ENCODE measurements at regions of chr17 and their contacts with region 1.

Region 1: GRCh38 chr17:81253358-81254131 is 14.4 kb downstream of the NDUFAF8 start:
- DNase-seq: peak in 1 of 5 donors; percentile 52
- ATAC-seq: peak in 3 of 4 donors; percentile 33 to 45 (median 35)
- H3K4me3 ChIP-seq: no peak overlapping the region
- H3K27ac ChIP-seq: no peak overlapping the region
- H3K4me1 ChIP-seq: peaks cover 3 to 19% (median 13%) of the 10 kb centered on the region in 12 donors
- H3K27me3 ChIP-seq: no peaks in the 10 kb centered on the region
- CTCF ChIP-seq: peak; percentile 66 to 88 (median 81)
- POLR2A ChIP-seq: no peak

Region 2: DNA sequence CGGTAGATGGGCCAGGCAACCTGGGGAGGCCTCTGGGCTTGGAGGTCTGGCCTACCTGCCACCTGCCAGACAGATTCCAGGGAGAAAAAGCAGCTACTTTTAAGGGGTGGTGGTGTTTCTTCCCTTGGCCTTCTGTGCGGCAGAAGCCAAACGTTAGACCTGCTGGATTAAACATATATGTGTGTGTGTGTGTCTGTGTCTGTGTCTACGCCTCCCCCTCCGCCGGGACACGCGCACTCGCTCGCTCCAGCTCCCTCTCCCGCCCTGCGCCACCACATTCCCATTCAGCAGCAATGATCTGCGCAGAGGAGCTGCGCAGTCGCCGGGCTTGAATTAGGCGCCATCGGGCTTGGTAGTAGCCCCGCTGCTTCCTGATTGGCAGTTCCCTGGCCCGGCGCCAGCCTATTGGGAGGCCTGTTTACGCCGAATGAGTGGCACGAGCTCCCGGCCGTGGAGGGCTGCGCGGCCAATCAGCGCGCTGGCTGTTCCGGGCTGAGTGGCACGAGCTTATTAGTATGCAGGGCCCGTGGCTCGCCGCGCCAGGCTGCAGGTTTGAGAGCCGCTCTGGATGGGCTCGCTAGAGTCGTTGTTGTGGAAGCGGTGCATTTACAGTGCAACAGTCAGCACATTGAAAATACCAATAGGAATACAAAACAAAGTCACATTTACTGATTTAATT is 141.5 kb after region 1 on chr17 and contains the start of gene BAHCC1:
- intact Hi-C with region 1: loop called in 1 of 10 experiments (anchors 2 kb)
- DNase-seq: peak; percentile 100
- ATAC-seq: peak; percentile 80 to 89 (median 87)
- H3K4me3 ChIP-seq: peak within 1 kb of the TSS; percentile 57 to 95 (median 80)
- H3K27ac ChIP-seq: peak within 1 kb of the TSS; percentile 91 to 100 (median 97)
- H3K4me1 ChIP-seq: peaks cover 6 to 67% (median 30%) of the 10 kb centered on the region in 12 donors
- H3K27me3 ChIP-seq: peaks cover 0 to 14% (median 0%) of the 10 kb centered on the region in 9 donors
- CTCF ChIP-seq: no peak
- POLR2A ChIP-seq: peak; percentile 55 to 98
- total RNA-seq, gene BAHCC1: 6.0 to 19.6 (median 9.3) TPM

Region 3: DNA sequence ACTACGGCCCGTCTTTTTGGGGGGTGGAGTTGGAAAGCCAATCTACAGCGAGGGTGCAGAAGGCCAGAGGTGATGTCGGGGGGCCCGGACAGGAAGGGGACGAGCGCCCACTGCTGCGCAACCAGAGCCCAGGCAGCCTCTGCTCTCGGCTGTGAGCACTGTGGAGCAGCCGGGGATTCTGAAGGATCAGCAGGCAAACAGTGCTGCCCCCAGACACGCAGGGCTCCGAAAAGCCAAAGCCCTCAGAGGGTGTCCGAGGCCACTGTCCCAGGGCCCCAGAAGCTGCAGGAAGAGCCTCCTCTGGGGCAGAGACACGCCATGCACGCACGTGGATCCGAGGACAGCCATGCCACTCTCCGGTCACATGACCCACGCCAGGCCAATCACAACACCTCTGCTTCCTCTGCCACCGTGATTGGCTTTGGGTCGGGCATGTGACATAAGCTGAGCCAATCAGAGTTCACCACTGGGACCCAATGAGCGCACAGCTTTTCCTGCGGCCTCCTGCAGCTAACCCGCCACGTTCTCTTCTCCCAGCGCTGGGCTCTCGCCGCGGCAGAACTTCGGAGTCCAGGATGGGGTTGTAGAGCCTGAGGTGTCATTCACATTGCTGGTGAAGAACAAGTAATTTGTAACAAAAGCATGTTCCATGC is 218.4 kb after region 1 on chr17:
- intact Hi-C with region 1: no loop called
- DNase-seq: peak in 1 of 5 donors; percentile 60
- ATAC-seq: peak; percentile 21 to 53 (median 24)
- H3K4me3 ChIP-seq: peak overlapping the region in 1 of 12 donors; percentile 16
- H3K27ac ChIP-seq: peak overlapping the region in 1 of 12 donors; percentile 44
- H3K4me1 ChIP-seq: peaks cover 0 to 5% (median 0%) of the 10 kb centered on the region in 12 donors
- H3K27me3 ChIP-seq: no peaks in the 10 kb centered on the region
- CTCF ChIP-seq: peak in 2 of 12 donors; percentile 9 to 18
- POLR2A ChIP-seq: no peak

Region 4: GRCh38 chr17:81537343-81537855 is 283.9 kb after region 1 on chr17:
- intact Hi-C with region 1: loop called in 7 of 10 experiments (anchors 5 kb)
- DNase-seq: no peak
- ATAC-seq: peak; percentile 37 to 68 (median 55)
- H3K4me3 ChIP-seq: no peak overlapping the region
- H3K27ac ChIP-seq: no peak overlapping the region
- H3K4me1 ChIP-seq: peaks cover 0 to 21% (median 16%) of the 10 kb centered on the region in 12 donors
- H3K27me3 ChIP-seq: peaks cover 0 to 36% (median 30%) of the 10 kb centered on the region in 9 donors
- CTCF ChIP-seq: peak; percentile 50 to 73 (median 65)
- POLR2A ChIP-seq: no peak

Region 5: DNA sequence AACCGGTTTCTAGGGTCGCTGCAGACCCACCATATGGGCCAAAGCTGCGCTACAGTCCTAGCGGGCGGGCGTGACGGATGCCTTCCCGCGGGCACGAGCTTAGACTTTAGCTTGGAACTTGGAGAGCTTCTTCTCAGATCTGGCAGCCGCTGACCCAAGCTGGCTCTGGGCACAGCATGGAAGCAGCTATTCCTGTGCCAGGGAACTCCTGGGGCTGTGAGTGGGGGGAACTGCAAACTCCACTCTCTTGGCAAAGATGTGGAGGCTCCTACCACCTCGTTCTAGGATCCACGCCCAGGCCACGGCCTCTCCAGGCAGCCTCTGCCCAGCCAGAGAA is 289.8 kb after region 1 on chr17:
- intact Hi-C with region 1: loop called in 7 of 10 experiments (anchors 5 kb)
- DNase-seq: peak in 2 of 5 donors; percentile 64 to 73
- ATAC-seq: peak; percentile 61 to 70 (median 68)
- H3K4me3 ChIP-seq: no peak overlapping the region
- H3K27ac ChIP-seq: peak overlapping the region in 4 of 12 donors; percentile 33 to 55 (median 46)
- H3K4me1 ChIP-seq: peaks cover 0 to 13% (median 0%) of the 10 kb centered on the region in 12 donors
- H3K27me3 ChIP-seq: peaks cover 0 to under 1% (median 0%) of the 10 kb centered on the region in 9 donors
- CTCF ChIP-seq: no peak
- POLR2A ChIP-seq: no peak